ENCODE measurements at regions of chr1 and their contacts with region 1.

Region 1: DNA sequence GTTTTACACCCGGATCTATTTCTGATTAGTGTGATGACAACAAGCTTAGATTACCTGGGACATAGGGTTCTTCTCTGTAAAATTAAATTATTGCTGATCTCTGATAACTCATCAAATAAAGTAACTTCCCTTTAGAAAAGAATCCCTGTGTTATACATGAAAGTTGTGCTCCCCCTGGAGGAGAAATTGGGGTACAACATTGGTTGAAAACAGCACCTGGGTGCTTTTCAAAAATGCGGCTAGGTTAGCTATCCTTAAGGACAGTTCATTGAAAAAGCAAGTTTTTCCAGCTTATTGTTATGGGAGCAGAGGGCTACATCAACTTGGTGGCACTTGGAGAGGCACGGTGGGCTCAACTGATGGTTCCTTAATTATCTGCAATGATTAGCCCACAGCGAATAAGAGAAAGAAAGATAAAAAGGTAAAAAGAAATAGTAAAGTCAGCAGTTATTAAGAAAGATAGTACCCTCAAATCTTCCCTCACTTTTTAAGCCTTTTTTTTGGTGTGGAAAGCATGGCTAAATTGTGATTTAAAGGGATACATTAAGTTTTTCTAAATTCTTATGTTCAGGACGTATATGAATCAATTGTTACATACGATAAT is 97.8 kb downstream of the FMN2 start:
- DNase-seq: peak; percentile 88
- H3K4me3 Mint-ChIP-seq: no peak overlapping the region
- H3K27ac Mint-ChIP-seq: no peak overlapping the region
- H3K4me1 Mint-ChIP-seq: peaks cover 14% of the 10 kb centered on the region
- H3K27me3 Mint-ChIP-seq: peaks cover 34% of the 10 kb centered on the region
- CTCF ChIP-seq: peak; percentile 90

Region 2: DNA sequence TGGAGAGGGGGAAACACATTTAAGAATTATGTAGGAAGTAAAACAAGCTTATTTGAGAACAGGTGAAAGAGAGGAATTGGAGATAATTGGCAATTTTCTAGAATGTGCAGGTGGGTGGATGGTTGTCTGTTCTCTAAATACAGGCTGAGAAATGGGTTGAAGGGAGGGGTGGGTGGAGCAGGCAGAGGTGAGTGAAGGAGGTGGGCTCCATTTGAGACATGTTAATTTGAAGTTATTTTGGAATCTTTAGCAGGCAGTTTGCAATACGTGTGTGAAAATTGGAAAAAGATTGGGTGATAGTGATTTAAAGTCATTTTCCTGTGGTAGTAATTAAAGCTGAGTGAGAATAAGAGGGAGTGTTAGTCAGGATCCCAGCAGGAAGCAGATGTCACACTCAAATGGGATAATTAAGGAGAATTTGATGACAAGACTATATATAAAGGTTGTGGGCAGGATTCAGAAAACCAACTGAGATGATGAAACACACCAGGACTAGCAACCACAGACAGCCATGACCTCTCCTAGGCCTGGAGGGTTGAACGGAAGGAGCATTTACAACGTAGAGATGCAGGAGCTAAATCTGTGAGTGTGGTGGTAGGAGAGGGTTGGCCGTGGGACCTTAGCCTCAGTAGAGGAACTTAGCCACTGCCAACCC is 762.5 kb before region 1 on chr1:
- CTCF ChIA-PET with region 1: no interaction called
- POLR2A ChIA-PET with region 1: no interaction called
- intact Hi-C with region 1: no loop called
- DNase-seq: no peak
- H3K4me3 Mint-ChIP-seq: no peak overlapping the region
- H3K27ac Mint-ChIP-seq: no peak overlapping the region
- H3K4me1 Mint-ChIP-seq: no peaks in the 10 kb centered on the region
- H3K27me3 Mint-ChIP-seq: no peaks in the 10 kb centered on the region
- CTCF ChIP-seq: no peak

Region 3: GRCh38 chr1:239843541-239843940 is 345.9 kb before region 1 on chr1:
- CTCF ChIA-PET with region 1: no interaction called
- POLR2A ChIA-PET with region 1: no interaction called
- intact Hi-C with region 1: no loop called
- DNase-seq: no peak
- H3K4me3 Mint-ChIP-seq: no peak overlapping the region
- H3K27ac Mint-ChIP-seq: no peak overlapping the region
- H3K4me1 Mint-ChIP-seq: no peaks in the 10 kb centered on the region
- H3K27me3 Mint-ChIP-seq: no peaks in the 10 kb centered on the region
- CTCF ChIP-seq: no peak

Region 4: DNA sequence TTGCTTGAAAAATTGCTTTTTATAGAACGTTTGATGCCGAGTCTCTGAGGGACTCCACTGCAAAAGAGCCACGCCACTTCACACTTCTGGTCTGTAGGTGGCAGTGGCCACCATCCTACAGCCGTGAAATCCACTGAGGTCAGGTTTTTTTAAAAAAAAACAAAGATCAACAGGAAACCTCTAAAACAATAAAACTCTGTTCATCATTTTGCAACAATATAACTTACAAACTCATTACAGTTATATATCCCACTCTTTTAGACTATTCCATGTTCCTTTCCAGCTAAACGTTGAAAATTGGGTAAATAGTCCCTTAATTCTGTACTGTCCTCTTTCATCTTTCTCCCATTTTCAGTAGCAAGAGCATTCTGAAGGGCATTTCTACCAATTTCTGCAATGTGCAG is 162.4 kb before region 1 on chr1:
- CTCF ChIA-PET with region 1: interaction called, 168 read pairs
- POLR2A ChIA-PET with region 1: no interaction called
- intact Hi-C with region 1: loop called (anchors 1 kb)
- DNase-seq: peak; percentile 81
- H3K4me3 Mint-ChIP-seq: no peak overlapping the region
- H3K27ac Mint-ChIP-seq: no peak overlapping the region
- H3K4me1 Mint-ChIP-seq: peaks cover 13% of the 10 kb centered on the region
- H3K27me3 Mint-ChIP-seq: no peaks in the 10 kb centered on the region
- CTCF ChIP-seq: peak; percentile 100

Region 5: GRCh38 chr1:240169188-240169587 is 20.3 kb before region 1 on chr1:
- CTCF ChIA-PET with region 1: interaction called, 56 read pairs
- POLR2A ChIA-PET with region 1: no interaction called
- intact Hi-C with region 1: no loop called
- DNase-seq: peak; percentile 59
- H3K4me3 Mint-ChIP-seq: no peak overlapping the region
- H3K27ac Mint-ChIP-seq: no peak overlapping the region
- H3K4me1 Mint-ChIP-seq: no peaks in the 10 kb centered on the region
- H3K27me3 Mint-ChIP-seq: no peaks in the 10 kb centered on the region
- CTCF ChIP-seq: peak; percentile 61

Region 6: DNA sequence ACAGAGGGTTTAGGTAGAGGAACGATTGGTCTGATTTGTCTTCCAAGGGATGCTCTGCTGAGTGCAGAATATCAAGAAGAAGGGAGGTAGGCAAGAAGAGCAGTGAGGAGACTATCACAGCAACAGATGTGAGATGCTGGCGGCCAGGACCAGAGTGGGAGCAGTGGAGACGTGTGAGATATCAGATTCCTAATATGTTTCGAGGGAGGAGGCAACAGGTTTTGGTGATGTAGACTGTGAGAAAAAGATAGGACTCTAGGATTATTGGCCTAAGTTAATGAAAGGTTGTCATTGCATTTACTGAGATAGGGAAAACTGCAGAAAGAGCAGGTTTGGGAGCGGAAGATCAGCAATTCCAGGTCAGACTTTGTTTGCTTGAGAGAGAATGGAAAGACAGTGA is 85.1 kb after region 1 on chr1:
- CTCF ChIA-PET with region 1: no interaction called
- POLR2A ChIA-PET with region 1: no interaction called
- intact Hi-C with region 1: no loop called
- DNase-seq: no peak
- H3K4me3 Mint-ChIP-seq: no peak overlapping the region
- H3K27ac Mint-ChIP-seq: no peak overlapping the region
- H3K4me1 Mint-ChIP-seq: no peaks in the 10 kb centered on the region
- H3K27me3 Mint-ChIP-seq: no peaks in the 10 kb centered on the region
- CTCF ChIP-seq: no peak

Region 7: DNA sequence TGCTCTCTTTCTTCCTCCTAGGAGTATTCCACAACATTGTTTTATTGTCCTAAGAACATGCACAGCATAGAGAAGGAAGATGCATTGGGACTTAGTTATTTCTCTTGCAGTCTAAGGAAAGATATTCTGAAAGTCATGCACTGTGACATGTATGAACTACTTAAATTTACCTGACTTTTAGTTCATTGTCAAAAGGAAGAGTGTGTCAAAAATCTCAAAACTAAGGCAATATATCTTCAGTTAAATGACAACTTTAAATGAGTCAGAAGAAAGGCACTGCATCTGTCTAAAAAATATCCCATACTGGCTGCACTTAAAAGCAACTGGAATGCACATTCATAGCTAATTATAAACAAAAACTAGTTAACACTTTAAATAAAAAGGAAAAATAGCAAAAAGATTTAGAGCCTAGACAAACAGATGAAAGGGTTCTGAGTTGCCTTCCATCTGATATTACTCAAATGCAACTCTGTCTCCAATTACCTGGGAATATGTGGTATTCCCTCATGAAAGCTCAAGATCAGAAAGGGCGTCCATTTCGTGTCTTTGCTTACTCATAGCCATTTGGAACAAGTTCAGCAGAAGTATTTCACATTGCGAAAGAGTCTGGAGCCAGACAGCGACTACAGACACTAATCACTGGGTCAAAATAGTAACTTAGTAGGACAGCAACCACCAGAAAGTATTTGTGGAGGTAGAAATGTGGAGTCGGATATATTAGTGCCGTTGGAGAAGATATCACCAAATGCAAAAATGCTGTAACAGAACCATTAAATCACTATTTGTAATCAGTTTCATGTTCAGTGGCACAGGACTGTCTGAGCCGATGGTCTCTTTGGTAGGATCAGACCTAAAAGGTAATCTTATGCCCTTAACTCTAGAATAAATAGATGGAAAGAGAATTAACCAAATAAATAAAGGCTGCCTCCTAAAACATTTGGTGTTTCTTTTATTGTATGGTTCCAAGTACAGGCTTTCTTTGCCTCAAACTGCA is 196.8 kb after region 1 on chr1:
- CTCF ChIA-PET with region 1: interaction called, 4 read pairs
- POLR2A ChIA-PET with region 1: no interaction called
- intact Hi-C with region 1: loop called (anchors 5 kb)
- DNase-seq: peak; percentile 99
- H3K4me3 Mint-ChIP-seq: peak overlapping the region; percentile 5
- H3K27ac Mint-ChIP-seq: peak overlapping the region; percentile 85
- H3K4me1 Mint-ChIP-seq: peaks cover 31% of the 10 kb centered on the region
- H3K27me3 Mint-ChIP-seq: no peaks in the 10 kb centered on the region
- CTCF ChIP-seq: no peak

Region 8: GRCh38 chr1:240611619-240612480 is 422.4 kb after region 1 on chr1 and contains the start of gene GREM2:
- CTCF ChIA-PET with region 1: interaction called, 140 read pairs
- POLR2A ChIA-PET with region 1: interaction called, 7 read pairs
- intact Hi-C with region 1: loop called (anchors 1 kb)
- DNase-seq: peak; percentile 72
- H3K4me3 Mint-ChIP-seq: peak within 1 kb of the TSS; percentile 86
- H3K27ac Mint-ChIP-seq: peak within 1 kb of the TSS; percentile 59
- H3K4me1 Mint-ChIP-seq: peaks cover 15% of the 10 kb centered on the region
- H3K27me3 Mint-ChIP-seq: no peaks in the 10 kb centered on the region
- CTCF ChIP-seq: no peak
- total RNA-seq, gene GREM2: 0.10 TPM in 1 of 2 replicates, not detected in the other

Region 9: GRCh38 chr1:240854367-240854766 is 664.9 kb after region 1 on chr1:
- CTCF ChIA-PET with region 1: no interaction called
- POLR2A ChIA-PET with region 1: no interaction called
- intact Hi-C with region 1: loop called (anchors 2 kb)
- DNase-seq: peak; percentile 79
- H3K4me3 Mint-ChIP-seq: no peak overlapping the region
- H3K27ac Mint-ChIP-seq: no peak overlapping the region
- H3K4me1 Mint-ChIP-seq: no peaks in the 10 kb centered on the region
- H3K27me3 Mint-ChIP-seq: no peaks in the 10 kb centered on the region
- CTCF ChIP-seq: peak; percentile 49